GM10248 (cell line): ENCODE measurements at regions of chr3 and their contacts with region 1.

Region 1: DNA sequence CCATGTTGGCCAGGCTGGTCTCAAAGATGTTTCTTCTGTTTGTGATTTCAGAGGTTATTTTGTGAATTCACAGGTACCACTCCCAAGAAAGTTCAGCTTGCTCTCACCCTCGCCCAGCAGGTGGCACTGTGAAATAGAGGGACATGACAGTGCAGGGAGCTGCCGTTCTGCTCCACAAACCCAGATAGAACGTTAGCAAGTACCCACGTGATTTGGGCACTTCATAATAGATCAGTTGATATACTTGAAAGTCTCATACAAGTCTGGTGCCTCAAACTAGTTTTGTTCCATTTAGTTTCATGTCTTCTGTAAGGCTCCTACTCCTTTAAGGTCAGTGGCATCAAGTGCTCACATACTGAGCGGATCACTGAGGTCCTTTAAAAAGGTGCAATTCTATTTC is 45.5 kb downstream of the FILIP1L start:
- DNase-seq: peak; percentile 77
- CTCF ChIP-seq: peak; percentile 72

Region 2: GRCh38 chr3:99842826-99843589 is 225.8 kb before region 1 on chr3:
- CTCF ChIA-PET with region 1: interaction called, 14 read pairs
- POLR2A ChIA-PET with region 1: no interaction called
- DNase-seq: peak; percentile 23
- CTCF ChIP-seq: peak; percentile 60

Region 3: GRCh38 chr3:100008081-100008698 is 60.6 kb before region 1 on chr3:
- CTCF ChIA-PET with region 1: no interaction called
- POLR2A ChIA-PET with region 1: no interaction called
- DNase-seq: no peak
- CTCF ChIP-seq: no peak

Region 4: GRCh38 chr3:100047455-100048141 is 21.2 kb before region 1 on chr3:
- CTCF ChIA-PET with region 1: interaction called, 22 read pairs
- POLR2A ChIA-PET with region 1: no interaction called
- DNase-seq: peak; percentile 42
- CTCF ChIP-seq: no peak

Region 5: DNA sequence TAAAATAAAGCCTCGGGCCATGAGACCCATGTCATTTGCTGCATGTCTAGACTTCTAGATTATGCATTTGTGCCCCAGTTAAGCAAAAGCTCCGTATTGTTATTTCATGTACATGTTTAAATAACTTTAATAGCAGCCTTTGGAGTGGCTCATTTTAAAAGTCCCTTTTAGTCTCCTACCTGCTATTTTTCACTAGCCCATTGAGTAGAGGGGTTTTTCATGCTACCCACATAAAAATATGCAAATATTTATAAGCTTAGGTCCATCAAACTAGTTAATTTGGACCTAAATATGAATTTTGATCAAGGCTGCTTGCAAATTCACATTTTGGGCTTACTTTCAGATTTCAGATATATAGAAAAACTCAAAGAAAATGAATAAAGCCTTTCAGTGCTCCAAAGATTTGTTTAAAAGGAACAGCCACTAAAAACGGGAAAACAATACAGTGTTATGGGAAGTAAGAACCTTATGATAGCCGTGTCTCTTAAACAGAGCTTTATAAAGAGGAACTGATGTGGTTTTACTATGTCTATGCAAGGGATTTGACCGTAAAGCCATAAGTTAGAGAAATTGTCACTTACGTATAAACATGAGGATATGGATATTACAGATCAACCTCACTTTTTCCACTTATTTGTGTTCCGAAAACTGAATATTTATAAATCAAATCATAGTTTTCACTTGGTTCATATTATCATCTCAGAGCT is 15.4 kb after region 1 on chr3:
- CTCF ChIA-PET with region 1: interaction called, 31 read pairs
- POLR2A ChIA-PET with region 1: no interaction called
- DNase-seq: no peak
- CTCF ChIP-seq: no peak

Region 6: GRCh38 chr3:100089812-100090668 is 21.2 kb after region 1 on chr3:
- CTCF ChIA-PET with region 1: interaction called, 31 read pairs
- POLR2A ChIA-PET with region 1: no interaction called
- DNase-seq: peak; percentile 35
- CTCF ChIP-seq: no peak

Region 7: DNA sequence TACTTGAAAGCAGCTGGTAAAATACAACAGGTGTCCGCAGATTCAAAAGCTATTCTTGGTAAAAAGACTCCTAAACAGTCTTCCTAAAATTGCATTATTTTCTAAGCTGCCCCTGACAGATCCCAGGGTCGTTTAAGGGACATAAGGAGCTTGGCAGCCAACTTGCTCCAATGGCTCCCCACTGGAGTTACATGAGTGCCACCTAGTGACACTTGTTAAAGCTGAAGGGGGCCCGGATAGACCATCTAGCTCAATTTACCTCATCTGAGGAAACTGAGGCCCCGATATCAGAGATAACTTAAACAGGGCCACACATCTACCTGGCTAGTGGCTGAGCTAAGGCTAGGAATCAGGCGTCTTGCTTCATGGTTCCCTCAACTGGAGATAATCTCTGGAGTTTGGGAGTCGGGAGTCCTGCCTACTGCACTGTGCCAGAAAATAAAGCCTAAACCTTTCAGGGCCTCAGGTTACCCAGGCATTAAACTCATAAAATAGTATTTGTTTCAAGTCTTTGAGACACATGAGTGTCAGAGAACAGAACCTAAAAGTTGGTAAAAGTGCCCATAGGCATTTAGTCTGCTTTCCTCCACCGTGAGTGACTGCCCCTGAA is 185.4 kb after region 1 on chr3:
- CTCF ChIA-PET with region 1: interaction called, 37 read pairs
- POLR2A ChIA-PET with region 1: no interaction called
- DNase-seq: peak; percentile 55
- CTCF ChIP-seq: peak; percentile 66

Region 8: DNA sequence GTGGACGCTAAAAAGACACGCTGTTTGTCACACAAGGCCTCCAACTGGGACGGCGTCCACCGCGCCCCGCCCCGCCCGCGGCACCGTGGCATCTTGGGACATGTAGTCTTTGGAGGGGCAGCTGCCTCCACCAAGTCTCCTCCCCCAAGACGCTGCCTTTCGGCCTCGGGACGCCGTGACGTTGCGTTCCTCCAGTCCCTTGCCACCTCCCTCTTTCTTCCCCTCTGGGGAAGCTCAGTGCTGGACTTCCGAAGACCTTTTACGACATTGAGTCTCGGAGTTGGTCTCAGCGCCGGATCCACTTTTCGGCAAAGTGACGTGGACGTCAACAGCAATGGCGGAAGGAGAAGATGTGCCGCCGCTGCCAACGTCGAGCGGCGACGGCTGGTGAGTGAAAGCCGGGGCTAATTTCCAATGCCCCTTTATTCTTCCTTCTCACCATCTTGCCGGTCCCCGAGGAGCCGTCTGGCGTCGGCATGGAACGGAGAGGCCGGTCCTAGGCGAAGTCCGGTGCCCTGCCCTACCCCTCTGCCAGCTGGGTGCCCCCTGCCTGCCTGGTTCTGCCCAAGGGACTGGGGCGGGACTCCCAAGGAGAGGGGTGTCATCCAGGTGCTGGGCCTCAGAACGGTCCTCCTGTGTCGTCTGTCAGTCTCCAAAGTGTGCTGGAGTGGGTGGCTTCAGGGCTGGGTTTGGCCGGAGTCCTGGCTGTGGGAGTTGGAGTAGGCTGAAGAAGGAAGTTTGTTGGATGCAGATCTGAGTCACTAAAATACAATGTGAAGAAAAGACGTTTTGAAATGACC is 192.1 kb after region 1 on chr3 and contains the start of gene TBC1D23:
- CTCF ChIA-PET with region 1: interaction called, 11 read pairs
- POLR2A ChIA-PET with region 1: interaction called, 3 read pairs
- DNase-seq: peak; percentile 99
- CTCF ChIP-seq: no peak